Naive thymus-derived CD4-positive, alpha-beta T cell (primary cell): ENCODE measurements at regions of chr15 and their contacts with region 1.

Region 1: DNA sequence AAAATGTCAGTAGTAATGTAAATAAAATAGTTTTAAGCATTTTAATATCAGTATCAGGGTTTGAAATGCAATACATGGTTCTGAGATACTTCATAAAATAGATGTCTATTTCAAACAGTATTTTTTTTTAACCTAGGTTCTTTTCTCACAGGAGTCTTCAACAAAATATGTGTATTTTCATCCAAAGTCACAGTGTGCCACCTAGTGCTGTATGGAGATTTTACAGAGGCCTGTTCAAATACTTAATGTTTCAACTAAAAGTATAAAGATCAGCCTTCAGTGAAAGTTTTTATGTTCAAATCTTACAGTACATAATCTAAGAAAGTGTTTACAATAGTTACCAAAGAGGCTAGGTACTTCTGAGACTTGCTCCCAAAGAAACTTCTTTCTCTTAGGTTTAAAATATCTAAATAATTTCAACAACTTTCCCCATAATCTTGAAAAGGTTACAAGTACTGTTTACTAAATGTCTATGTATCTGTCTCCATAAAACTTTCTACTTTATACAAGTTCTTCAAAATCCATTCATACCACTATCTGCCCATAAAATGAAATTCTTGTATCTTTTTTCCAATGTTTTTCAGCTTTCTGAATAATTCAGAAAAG is 38.3 kb downstream of the SCAPER start:
- DNase-seq: peak in 4 of 9 donors; percentile 6 to 22 (median 13)
- ATAC-seq: no peak
- H3K4me3 ChIP-seq: no peak overlapping the region
- H3K4me3 Mint-ChIP-seq: no peak overlapping the region
- H3K27ac ChIP-seq: no peak overlapping the region
- H3K27ac Mint-ChIP-seq: no peak overlapping the region
- H3K4me1 ChIP-seq: no peaks in the 10 kb centered on the region
- H3K4me1 Mint-ChIP-seq: peaks cover 18 to 73% (median 50%) of the 10 kb centered on the region in 7 donors
- H3K27me3 ChIP-seq: no peaks in the 10 kb centered on the region
- H3K27me3 Mint-ChIP-seq: no peaks in the 10 kb centered on the region

Region 2: GRCh38 chr15:76642671-76643070 is 224.1 kb before region 1 on chr15:
- CTCF ChIA-PET with region 1: no interaction called
- POLR2A ChIA-PET with region 1: no interaction called
- intact Hi-C with region 1: loop called in 1 of 2 experiments (anchors 1 kb)
- DNase-seq: no peak
- ATAC-seq: no peak
- H3K4me3 ChIP-seq: no peak overlapping the region
- H3K4me3 Mint-ChIP-seq: no peak overlapping the region
- H3K27ac ChIP-seq: no peak overlapping the region
- H3K27ac Mint-ChIP-seq: no peak overlapping the region
- H3K4me1 ChIP-seq: no peaks in the 10 kb centered on the region
- H3K4me1 Mint-ChIP-seq: peaks cover 0 to 5% (median 0%) of the 10 kb centered on the region in 7 donors
- H3K27me3 ChIP-seq: no peaks in the 10 kb centered on the region
- H3K27me3 Mint-ChIP-seq: no peaks in the 10 kb centered on the region